PC-3 (cell line): ENCODE measurements at regions of chr2 and their contacts with region 1.

Region 1: GRCh38 chr2:236569573-236569973 is at the start of gene ACKR3:
- DNase-seq: peak; percentile 82
- ATAC-seq: peak; percentile 99
- H3K4me3 ChIP-seq: peak within 1 kb of the TSS; percentile 70
- H3K27ac ChIP-seq: no peak within 1 kb of the TSS
- H3K4me1 ChIP-seq: peaks cover 21% of the 10 kb centered on the region; the same call in 1 of the 2 replicates
- H3K27me3 ChIP-seq: no peaks in the 10 kb centered on the region
- CTCF ChIP-seq: peak; percentile 66
- total RNA-seq, gene ACKR3: 0.86 and 3.1 TPM in 2 replicates

Region 2: DNA sequence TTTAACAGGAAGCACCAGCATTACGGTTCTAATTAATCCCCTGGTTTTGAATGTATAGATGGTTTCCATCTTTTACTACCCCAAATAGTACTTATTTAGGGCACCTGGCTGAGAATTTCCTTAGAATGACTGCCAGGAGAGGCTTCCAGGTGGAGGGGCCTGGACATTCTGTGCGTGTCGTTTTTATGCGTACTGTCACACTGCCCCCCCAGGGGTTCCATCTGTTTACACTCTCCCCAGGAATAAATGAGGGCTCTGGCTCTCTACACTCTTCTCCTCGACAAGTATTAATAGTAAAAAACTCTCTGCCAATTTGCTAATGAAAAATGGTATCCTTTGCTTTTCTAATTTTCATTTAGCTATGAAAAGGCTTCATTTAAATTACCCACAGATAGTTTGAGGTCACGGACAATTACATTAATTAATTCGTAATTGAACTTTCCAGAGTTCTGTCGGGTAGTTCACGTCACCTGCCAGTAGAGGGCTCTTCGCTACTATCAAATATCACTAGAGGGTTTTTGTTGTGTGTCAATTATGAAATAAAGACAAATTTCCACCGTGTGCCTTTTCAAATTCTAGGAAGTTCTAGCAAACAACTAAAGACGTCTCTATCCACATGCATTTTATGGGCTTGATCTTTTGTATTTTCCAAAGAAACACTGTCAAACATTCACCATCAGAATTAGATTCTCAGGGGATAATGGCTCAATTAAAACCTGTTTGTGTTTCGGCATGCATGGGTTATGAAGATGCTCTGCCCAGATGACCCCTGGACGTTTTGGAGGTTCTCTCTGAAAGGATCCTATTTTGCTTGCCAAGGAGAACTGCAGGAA is 216.6 kb before region 1 on chr2:
- CTCF ChIA-PET with region 1: no interaction called
- POLR2A ChIA-PET with region 1: no interaction called
- intact Hi-C with region 1: loop called (anchors 1 kb)
- DNase-seq: peak; percentile 52
- ATAC-seq: peak; percentile 46; the same call in 1 of the 2 replicates
- H3K4me3 ChIP-seq: no peak overlapping the region
- H3K27ac ChIP-seq: no peak overlapping the region
- H3K4me1 ChIP-seq: no peaks in the 10 kb centered on the region
- H3K27me3 ChIP-seq: no peaks in the 10 kb centered on the region
- CTCF ChIP-seq: peak; percentile 91

Region 3: GRCh38 chr2:236512902-236513435 is 56.6 kb before region 1 on chr2:
- CTCF ChIA-PET with region 1: interaction called, 14 read pairs
- POLR2A ChIA-PET with region 1: no interaction called
- intact Hi-C with region 1: loop called (anchors 5 kb)
- DNase-seq: peak; percentile 67
- ATAC-seq: peak; percentile 90
- H3K4me3 ChIP-seq: no peak overlapping the region
- H3K27ac ChIP-seq: no peak overlapping the region
- H3K4me1 ChIP-seq: no peaks in the 10 kb centered on the region
- H3K27me3 ChIP-seq: no peaks in the 10 kb centered on the region
- CTCF ChIP-seq: peak; percentile 86

Region 4: DNA sequence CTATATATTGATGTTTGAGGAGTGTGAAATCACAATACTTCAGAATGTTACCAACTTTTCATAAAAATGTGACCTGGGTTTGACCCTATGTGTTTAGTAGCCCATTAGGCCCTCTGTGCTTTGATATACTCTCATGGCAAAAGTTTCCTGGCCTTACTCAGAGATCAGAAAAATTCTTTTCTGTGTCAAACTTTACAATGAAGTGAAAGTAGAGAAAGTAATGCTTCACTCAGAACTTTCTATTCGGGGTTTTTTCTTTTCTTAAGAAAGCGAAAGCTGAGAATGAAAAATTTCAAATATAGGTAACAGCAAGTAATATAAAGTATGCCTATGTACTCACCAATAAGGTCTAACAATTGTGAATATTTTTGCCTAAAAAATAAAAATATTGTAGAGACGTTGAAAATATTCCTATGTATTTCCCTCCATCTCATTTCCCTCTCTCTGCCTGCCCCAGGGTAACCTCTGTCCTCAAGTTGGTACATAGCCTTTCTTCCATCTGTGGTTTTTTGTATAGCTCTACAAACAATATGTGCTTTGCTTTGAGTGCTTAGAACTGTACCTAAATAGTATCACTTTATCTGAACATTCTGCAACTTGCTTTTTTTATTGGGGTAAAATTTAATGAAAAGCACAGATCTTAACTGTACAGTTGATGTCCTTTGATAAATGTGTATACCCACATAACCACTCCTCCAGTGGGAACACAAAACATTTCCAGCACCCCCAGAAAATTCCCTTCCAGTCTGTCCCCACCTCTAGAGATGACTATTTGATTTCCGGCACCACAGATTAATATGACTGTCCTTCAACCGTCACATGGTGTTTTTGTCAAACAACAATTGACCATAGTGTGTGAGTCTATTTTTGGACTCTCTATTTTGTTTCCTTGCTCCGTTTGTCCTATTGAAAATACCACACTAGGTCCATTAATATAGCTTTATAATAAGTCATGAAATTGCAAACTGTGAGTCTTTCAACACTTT is 10.3 kb before region 1 on chr2:
- CTCF ChIA-PET with region 1: no interaction called
- POLR2A ChIA-PET with region 1: no interaction called
- intact Hi-C with region 1: no loop called
- DNase-seq: no peak
- ATAC-seq: no peak
- H3K4me3 ChIP-seq: no peak overlapping the region
- H3K27ac ChIP-seq: no peak overlapping the region
- H3K4me1 ChIP-seq: no peaks in the 10 kb centered on the region
- H3K27me3 ChIP-seq: no peaks in the 10 kb centered on the region
- CTCF ChIP-seq: no peak

Region 5: GRCh38 chr2:236691799-236692167 is 122.2 kb after region 1 on chr2:
- CTCF ChIA-PET with region 1: no interaction called
- POLR2A ChIA-PET with region 1: no interaction called
- intact Hi-C with region 1: no loop called
- DNase-seq: no peak
- ATAC-seq: no peak
- H3K4me3 ChIP-seq: no peak overlapping the region
- H3K27ac ChIP-seq: no peak overlapping the region
- H3K4me1 ChIP-seq: no peaks in the 10 kb centered on the region
- H3K27me3 ChIP-seq: no peaks in the 10 kb centered on the region
- CTCF ChIP-seq: no peak